Activated B cell treated with CpG ODN at 0.5 μM for 24 hours (primary cell): ENCODE measurements at regions of chr3 and their contacts with region 1.

Region 1: GRCh38 chr3:49339945-49340800 is at the start of gene USP4:
- DNase-seq: peak; percentile 88
- ATAC-seq: peak; percentile 84
- H3K4me3 Mint-ChIP-seq: peak within 1 kb of the TSS; percentile 95
- H3K27ac Mint-ChIP-seq: peak within 1 kb of the TSS; percentile 99
- H3K4me1 Mint-ChIP-seq: peaks cover 64% of the 10 kb centered on the region
- H3K27me3 Mint-ChIP-seq: no peaks in the 10 kb centered on the region
- CTCF ChIP-seq: no peak
- total RNA-seq, gene USP4: 86.7 and 115 TPM in 2 replicates

Region 2: GRCh38 chr3:48472915-48473616 is 867.1 kb before region 1 on chr3:
- CTCF ChIA-PET with region 1: no interaction called
- POLR2A ChIA-PET with region 1: no interaction called
- intact Hi-C with region 1: no loop called
- DNase-seq: peak; percentile 84
- ATAC-seq: peak; percentile 89
- H3K4me3 Mint-ChIP-seq: peak overlapping the region; percentile 89
- H3K27ac Mint-ChIP-seq: peak overlapping the region; percentile 99
- H3K4me1 Mint-ChIP-seq: peaks cover 79% of the 10 kb centered on the region
- H3K27me3 Mint-ChIP-seq: no peaks in the 10 kb centered on the region
- CTCF ChIP-seq: no peak

Region 3: GRCh38 chr3:48918388-48919214 is 421.6 kb before region 1 on chr3 and contains the start of gene ARIH2:
- CTCF ChIA-PET with region 1: no interaction called
- POLR2A ChIA-PET with region 1: interaction called, 11 read pairs
- intact Hi-C with region 1: no loop called
- DNase-seq: peak; percentile 91
- ATAC-seq: peak; percentile 85
- H3K4me3 Mint-ChIP-seq: peak within 1 kb of the TSS; percentile 99
- H3K27ac Mint-ChIP-seq: peak within 1 kb of the TSS; percentile 98
- H3K4me1 Mint-ChIP-seq: peaks cover 32% of the 10 kb centered on the region
- H3K27me3 Mint-ChIP-seq: no peaks in the 10 kb centered on the region
- CTCF ChIP-seq: no peak
- total RNA-seq, gene ARIH2: 96.6 and 112 TPM in 2 replicates

Region 4: DNA sequence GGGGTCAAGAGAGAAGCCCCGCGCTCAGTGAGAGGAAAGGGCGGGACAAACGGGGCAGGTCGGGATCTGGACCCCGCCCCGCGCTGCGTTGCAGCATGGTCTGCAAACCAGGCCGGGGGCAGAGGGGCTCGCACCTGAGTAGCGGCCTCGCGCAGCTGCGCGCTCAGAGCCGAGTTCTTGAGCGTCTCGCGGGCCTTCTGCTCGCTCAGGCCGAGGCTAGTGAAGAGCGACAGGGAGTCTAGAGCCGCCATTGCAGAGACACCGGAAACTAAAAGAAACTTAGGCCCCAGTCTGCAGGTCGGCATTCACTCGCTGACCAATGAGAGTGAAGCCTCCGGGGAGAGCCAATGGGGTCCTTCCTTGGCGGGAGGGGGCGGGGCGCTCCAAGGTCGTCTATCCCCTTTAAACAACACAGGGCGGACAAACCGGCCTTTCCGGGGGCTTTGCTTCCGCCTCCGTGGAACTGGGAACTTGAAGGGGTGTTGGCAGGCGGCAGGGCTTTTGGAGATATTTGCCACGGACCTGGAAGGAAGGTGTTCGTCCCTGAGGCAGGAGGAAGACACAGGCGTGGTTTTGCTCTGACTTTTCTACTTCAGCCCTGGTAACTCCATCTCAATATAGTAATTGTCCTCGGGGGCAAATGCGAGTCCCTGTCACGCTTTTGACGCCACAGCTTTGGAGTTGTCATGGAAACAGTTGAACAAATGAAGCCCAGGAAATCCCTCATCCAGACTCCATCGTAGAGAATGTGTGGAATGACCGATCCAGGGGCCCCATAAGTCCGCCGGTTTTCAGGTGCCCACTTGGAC is 235.5 kb before region 1 on chr3 and contains the start of gene QARS1:
- CTCF ChIA-PET with region 1: no interaction called
- POLR2A ChIA-PET with region 1: interaction called, 5 read pairs
- intact Hi-C with region 1: loop called (anchors 1 kb)
- DNase-seq: peak; percentile 77
- ATAC-seq: peak; percentile 99
- H3K4me3 Mint-ChIP-seq: peak within 1 kb of the TSS; percentile 98
- H3K27ac Mint-ChIP-seq: peak within 1 kb of the TSS; percentile 97
- H3K4me1 Mint-ChIP-seq: peaks cover 28% of the 10 kb centered on the region
- H3K27me3 Mint-ChIP-seq: no peaks in the 10 kb centered on the region
- CTCF ChIP-seq: no peak
- total RNA-seq, gene QARS1: 321 and 342 TPM in 2 replicates

Region 5: GRCh38 chr3:49177073-49177472 is 163.1 kb before region 1 on chr3:
- CTCF ChIA-PET with region 1: no interaction called
- POLR2A ChIA-PET with region 1: no interaction called
- intact Hi-C with region 1: no loop called
- DNase-seq: no peak
- ATAC-seq: no peak
- H3K4me3 Mint-ChIP-seq: no peak overlapping the region
- H3K27ac Mint-ChIP-seq: no peak overlapping the region
- H3K4me1 Mint-ChIP-seq: no peaks in the 10 kb centered on the region
- H3K27me3 Mint-ChIP-seq: peaks cover 19% of the 10 kb centered on the region
- CTCF ChIP-seq: no peak

Region 6: DNA sequence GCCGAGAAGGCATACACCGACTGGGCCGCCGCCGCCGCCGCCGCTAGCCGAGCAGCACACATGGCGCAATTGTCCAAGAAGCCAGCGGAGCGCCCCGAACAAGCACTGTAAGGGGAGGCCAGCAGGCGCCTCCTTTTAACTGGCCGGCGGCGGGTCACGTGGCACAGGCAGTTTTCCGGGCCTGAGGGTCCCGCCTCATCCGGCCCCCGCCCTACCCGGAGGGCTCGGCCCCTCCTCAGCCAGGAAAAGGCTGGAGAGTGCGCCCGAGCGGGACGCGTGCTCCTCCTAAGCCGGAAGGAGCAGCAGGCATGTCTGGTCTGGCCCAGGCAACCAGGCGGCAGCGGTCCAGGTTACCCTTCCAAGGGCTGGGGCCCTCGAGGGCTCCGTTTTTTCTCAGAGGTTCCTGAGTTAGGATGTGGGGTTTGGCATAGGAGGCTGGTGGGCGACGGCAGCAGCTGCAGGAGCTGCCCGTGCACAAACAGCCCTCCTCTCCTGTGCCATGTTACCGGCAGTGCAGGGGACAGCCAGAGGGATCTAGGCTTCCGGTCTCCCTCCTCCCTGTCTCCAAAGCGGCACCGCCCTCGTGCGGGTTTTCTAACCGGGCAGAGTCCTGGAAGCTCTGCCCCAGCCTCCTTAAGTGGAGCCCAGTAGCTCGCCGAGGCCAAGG is 18.2 kb after region 1 on chr3 and contains the start of gene GPX1:
- CTCF ChIA-PET with region 1: interaction called, 11 read pairs
- POLR2A ChIA-PET with region 1: interaction called, 106 read pairs
- intact Hi-C with region 1: loop called (anchors 1 kb)
- DNase-seq: peak; percentile 67
- ATAC-seq: peak; percentile 77
- H3K4me3 Mint-ChIP-seq: peak within 1 kb of the TSS; percentile 89
- H3K27ac Mint-ChIP-seq: peak within 1 kb of the TSS; percentile 90
- H3K4me1 Mint-ChIP-seq: peaks cover 35% of the 10 kb centered on the region
- H3K27me3 Mint-ChIP-seq: no peaks in the 10 kb centered on the region
- CTCF ChIP-seq: no peak
- total RNA-seq, gene GPX1: 90.0 and 94.6 TPM in 2 replicates

Region 7: GRCh38 chr3:49406571-49407566 is 66.7 kb after region 1 on chr3:
- CTCF ChIA-PET with region 1: interaction called, 6 read pairs
- POLR2A ChIA-PET with region 1: interaction called, 78 read pairs
- intact Hi-C with region 1: loop called (anchors 1 kb)
- DNase-seq: no peak
- ATAC-seq: no peak
- H3K4me3 Mint-ChIP-seq: peak overlapping the region; percentile 50
- H3K27ac Mint-ChIP-seq: peak overlapping the region; percentile 63
- H3K4me1 Mint-ChIP-seq: peaks cover 66% of the 10 kb centered on the region
- H3K27me3 Mint-ChIP-seq: no peaks in the 10 kb centered on the region
- CTCF ChIP-seq: no peak

Region 8: GRCh38 chr3:49445381-49445780 is 105.2 kb after region 1 on chr3:
- CTCF ChIA-PET with region 1: interaction called, 52 read pairs
- POLR2A ChIA-PET with region 1: interaction called, 63 read pairs
- intact Hi-C with region 1: loop called (anchors 1 kb)
- DNase-seq: no peak
- ATAC-seq: no peak
- H3K4me3 Mint-ChIP-seq: no peak overlapping the region
- H3K27ac Mint-ChIP-seq: peak overlapping the region; percentile 35
- H3K4me1 Mint-ChIP-seq: peaks cover 22% of the 10 kb centered on the region
- H3K27me3 Mint-ChIP-seq: no peaks in the 10 kb centered on the region
- CTCF ChIP-seq: no peak

Region 9: DNA sequence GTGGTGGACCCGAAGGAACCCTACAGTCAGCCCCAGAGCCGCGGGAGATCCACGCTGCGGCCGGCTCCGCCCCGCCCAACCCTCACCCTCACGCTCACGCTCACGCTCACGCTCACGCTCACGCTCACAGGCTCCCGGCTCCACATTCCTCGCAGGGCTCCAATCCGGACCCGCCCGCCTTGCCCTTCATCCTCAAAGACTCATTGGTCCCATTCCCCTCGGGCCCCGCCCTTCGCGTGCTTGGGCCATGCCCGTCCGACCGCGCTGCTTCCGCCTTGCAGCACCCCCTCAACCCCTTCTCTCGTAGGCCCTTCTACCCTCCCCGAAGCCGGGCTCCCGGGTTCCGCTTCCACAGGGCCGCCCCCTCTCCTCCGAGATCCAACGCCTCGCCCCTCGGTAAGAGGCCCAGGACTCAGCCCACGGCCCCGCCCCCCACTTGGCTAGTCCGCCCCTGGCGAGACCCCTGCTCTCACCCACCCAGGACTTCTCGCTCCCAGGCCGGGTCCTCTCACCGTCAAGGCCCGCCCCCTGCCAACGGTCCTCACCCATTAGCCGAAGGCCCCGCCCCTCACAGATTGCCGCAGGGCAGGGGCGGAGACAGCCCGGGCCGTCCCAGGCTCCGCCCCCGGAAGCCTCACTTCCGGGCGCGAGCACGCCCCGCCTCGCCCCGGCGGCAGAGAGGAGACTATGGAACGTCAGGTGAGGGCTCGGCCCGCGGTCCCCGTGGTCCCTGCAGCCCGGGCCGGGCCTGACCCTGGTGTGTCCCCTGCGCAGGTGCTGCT is 333.7 kb after region 1 on chr3 and contains the start of gene APEH:
- CTCF ChIA-PET with region 1: interaction called, 3 read pairs
- POLR2A ChIA-PET with region 1: no interaction called
- intact Hi-C with region 1: loop called (anchors 5 kb)
- DNase-seq: peak; percentile 98
- ATAC-seq: peak; percentile 88
- H3K4me3 Mint-ChIP-seq: peak within 1 kb of the TSS; percentile 91
- H3K27ac Mint-ChIP-seq: peak within 1 kb of the TSS; percentile 98
- H3K4me1 Mint-ChIP-seq: peaks cover 22% of the 10 kb centered on the region
- H3K27me3 Mint-ChIP-seq: no peaks in the 10 kb centered on the region
- CTCF ChIP-seq: no peak
- total RNA-seq, gene APEH: 109 and 113 TPM in 2 replicates